HEK293T (cell line): ENCODE measurements at regions of chr19 and their contacts with region 1.

Region 1: DNA sequence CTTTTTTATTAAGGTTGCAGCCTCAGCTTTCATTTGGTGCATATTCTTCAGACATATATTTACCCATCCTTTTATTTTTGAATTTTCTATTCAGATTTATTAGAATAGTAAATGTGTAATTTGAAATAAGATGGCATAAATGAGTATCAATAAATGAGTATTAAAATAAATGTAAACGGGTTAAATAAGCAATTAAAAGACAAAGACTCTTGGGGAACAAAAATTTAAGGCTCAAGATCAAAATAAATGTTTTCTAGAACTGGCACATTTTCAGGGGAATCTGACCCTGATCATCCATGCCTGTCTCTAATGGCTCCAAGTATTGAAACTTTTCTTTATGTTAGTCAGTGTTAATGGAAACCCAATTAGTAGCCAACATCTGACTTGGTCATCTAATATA is 3.0 kb downstream of the OR10H3 start:
- DNase-seq: no peak

Region 2: GRCh38 chr19:16098845-16099244 is 358.1 kb after region 1 on chr19:
- CTCF ChIA-PET with region 1: interaction called, 11 read pairs
- POLR2A ChIA-PET with region 1: no interaction called
- DNase-seq: no peak